Lower leg skin (tissue), 4 donors: ENCODE measurements at regions of chr12 and their contacts with region 1.

Region 1: DNA sequence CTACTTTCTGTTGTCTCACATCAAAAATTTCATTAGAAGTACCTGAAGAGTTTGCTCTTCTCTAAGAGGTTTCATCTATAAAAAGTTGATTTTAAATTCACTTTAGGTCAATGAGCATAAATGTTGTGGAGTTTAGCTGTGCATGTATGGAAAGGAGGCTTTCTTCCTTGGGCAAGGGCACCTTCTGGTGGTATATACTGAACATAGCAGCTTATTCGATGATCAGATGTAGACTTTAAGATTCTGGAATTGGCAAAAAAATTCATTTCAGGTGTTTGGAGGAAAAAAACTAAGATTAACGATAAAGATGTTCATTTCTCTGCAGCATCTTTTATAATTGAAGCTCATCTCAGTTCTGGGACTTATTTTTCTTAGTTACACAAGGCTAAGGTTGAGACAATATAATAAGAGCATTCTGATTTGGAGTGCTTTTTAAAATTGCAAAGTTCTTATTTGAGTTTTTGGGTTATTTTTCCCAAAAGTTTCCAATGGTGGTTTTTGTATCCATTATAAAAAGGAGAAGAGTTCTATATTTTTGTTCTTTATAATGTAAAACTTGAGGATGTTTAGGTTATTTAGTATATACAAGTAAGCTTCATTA is 46.8 kb downstream of the TMEM117 start:
- DNase-seq: no peak
- H3K4me3 ChIP-seq: no peak overlapping the region
- CTCF ChIP-seq: peak in 1 of 3 donors; percentile 38
- POLR2A ChIP-seq: no peak

Region 2: GRCh38 chr12:43602738-43603137 is 279.9 kb before region 1 on chr12:
- intact Hi-C with region 1: no loop called
- DNase-seq: no peak
- H3K4me3 ChIP-seq: no peak overlapping the region
- CTCF ChIP-seq: no peak
- POLR2A ChIP-seq: no peak

Region 3: DNA sequence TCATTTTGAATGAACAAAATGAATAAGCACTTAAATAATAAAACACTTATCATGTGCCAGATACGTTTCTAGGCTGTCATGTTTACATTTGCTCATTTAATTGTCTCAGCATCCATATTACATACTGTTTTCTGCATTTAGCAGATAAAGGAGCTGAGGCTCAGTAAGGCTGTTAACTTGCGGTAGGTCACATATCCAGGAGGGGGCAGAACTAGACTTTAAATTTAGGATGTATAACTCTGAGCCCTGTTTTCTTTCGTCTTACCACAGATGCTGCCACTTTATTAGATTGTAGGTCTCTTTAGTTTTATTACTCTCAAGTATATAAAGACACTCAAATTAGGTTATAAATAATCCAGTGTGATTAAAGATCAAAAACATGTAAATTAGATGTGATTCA is 106.2 kb before region 1 on chr12:
- intact Hi-C with region 1: loop called (anchors 5 kb)
- DNase-seq: no peak
- H3K4me3 ChIP-seq: no peak overlapping the region
- CTCF ChIP-seq: no peak
- POLR2A ChIP-seq: no peak